PC-3 (cell line): ENCODE measurements at regions of chr6 and their contacts with region 1.

Region 1: GRCh38 chr6:37131104-37131959 is 38.6 kb upstream of the PIM1 start:
- DNase-seq: no peak
- ATAC-seq: no peak
- H3K4me3 ChIP-seq: no peak overlapping the region
- H3K27ac ChIP-seq: peak overlapping the region; percentile 53
- H3K4me1 ChIP-seq: peaks cover 68% of the 10 kb centered on the region
- H3K27me3 ChIP-seq: no peaks in the 10 kb centered on the region
- CTCF ChIP-seq: no peak

Region 2: DNA sequence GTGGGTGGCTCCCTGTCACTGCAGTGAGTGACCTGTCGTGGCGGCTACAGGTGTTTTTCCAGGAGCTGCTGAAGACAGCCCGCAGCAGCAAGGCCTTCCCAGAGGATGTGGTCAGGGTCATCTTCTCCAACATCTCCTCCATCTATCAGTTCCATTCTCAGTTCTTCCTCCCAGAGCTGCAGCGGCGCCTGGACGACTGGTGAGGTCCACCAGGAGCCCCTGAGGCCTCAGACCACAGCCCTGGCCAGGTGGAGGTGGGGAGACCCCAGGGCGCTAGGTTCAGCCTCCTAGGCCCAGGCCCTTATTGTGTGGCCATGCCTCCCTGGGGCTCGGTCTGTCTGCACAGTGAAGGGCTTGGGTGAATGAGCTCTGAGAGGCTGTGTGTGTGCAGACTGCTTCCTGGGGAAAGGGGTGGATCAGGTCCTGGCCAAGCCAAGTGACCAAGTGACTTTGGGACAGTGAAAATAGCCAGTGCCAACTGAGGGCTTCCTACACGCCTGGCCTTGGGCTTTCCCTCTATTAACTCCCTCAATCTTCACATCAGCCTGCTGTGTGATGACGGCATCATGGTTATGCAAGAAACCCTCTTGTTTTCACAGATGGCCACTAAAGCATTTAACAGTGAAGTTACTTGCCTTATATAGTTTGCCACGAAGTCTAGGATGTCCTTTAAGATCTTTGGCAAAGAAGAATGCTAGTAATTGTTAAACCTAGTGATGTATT is 119.5 kb before region 1 on chr6:
- CTCF ChIA-PET with region 1: no interaction called
- POLR2A ChIA-PET with region 1: interaction called, 25 read pairs
- intact Hi-C with region 1: no loop called
- DNase-seq: no peak
- ATAC-seq: no peak
- H3K4me3 ChIP-seq: no peak overlapping the region
- H3K27ac ChIP-seq: no peak overlapping the region
- H3K4me1 ChIP-seq: no peaks in the 10 kb centered on the region
- H3K27me3 ChIP-seq: no peaks in the 10 kb centered on the region
- CTCF ChIP-seq: no peak

Region 3: GRCh38 chr6:37149745-37150144 is 18.4 kb after region 1 on chr6:
- CTCF ChIA-PET with region 1: no interaction called
- POLR2A ChIA-PET with region 1: no interaction called
- intact Hi-C with region 1: no loop called
- DNase-seq: no peak
- ATAC-seq: no peak
- H3K4me3 ChIP-seq: no peak overlapping the region
- H3K27ac ChIP-seq: no peak overlapping the region
- H3K4me1 ChIP-seq: peaks cover 1% of the 10 kb centered on the region; the same call in 1 of the 2 replicates
- H3K27me3 ChIP-seq: no peaks in the 10 kb centered on the region
- CTCF ChIP-seq: no peak

Region 4: DNA sequence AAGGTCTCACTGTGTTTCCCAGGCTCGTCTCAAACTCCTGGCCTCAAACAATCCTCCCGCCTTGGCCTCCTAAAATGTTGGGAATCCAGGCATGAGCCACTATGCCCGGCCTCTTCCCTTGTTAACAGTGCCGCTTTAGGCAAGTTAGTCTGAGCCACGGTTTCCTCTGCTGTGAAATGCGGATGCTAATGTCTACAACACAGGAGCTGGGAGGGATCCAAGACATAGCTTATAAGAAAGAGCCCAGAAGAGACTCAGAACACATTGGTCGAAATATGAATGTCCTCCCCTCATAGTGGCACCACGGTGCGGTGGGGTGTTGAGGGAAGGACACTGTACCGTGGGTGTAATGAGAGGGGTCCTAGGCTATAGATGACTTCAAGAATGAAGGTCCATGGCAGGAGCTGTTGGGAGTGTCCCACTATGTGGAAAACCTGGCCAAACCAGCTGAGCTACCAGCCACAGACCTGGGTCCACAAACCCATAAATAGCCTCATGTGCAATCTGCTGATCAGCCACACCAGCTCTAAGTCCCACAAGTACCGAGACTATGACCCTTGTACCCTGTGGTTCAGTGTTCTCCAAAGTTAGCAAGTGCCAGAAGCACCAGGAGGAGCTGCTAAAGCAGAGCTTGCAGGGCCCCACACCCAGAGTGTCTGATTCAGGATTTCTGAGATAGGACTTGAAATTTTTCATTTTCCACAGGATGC is 630.4 kb after region 1 on chr6:
- CTCF ChIA-PET with region 1: no interaction called
- POLR2A ChIA-PET with region 1: no interaction called
- intact Hi-C with region 1: no loop called
- DNase-seq: no peak
- ATAC-seq: no peak
- H3K4me3 ChIP-seq: no peak overlapping the region
- H3K27ac ChIP-seq: no peak overlapping the region
- H3K4me1 ChIP-seq: no peaks in the 10 kb centered on the region
- H3K27me3 ChIP-seq: no peaks in the 10 kb centered on the region
- CTCF ChIP-seq: no peak